T-cell (primary cell): ENCODE measurements at regions of chr6 and their contacts with region 1.

Region 1: GRCh38 chr6:168609914-168610490 is 169.0 kb downstream of the SMOC2 start:
- DNase-seq: no peak
- ATAC-seq: no peak
- H3K4me3 ChIP-seq: no peak overlapping the region
- H3K4me3 Mint-ChIP-seq: no peak overlapping the region
- H3K27ac ChIP-seq: no peak overlapping the region
- H3K27ac Mint-ChIP-seq: no peak overlapping the region
- H3K4me1 ChIP-seq: no peaks in the 10 kb centered on the region
- H3K4me1 Mint-ChIP-seq: no peaks in the 10 kb centered on the region
- H3K27me3 ChIP-seq: peaks cover 0 to 7% of the 10 kb centered on the region in 2 experiments
- H3K27me3 Mint-ChIP-seq: peaks cover 2 to 7% of the 10 kb centered on the region in 2 donors

Region 2: DNA sequence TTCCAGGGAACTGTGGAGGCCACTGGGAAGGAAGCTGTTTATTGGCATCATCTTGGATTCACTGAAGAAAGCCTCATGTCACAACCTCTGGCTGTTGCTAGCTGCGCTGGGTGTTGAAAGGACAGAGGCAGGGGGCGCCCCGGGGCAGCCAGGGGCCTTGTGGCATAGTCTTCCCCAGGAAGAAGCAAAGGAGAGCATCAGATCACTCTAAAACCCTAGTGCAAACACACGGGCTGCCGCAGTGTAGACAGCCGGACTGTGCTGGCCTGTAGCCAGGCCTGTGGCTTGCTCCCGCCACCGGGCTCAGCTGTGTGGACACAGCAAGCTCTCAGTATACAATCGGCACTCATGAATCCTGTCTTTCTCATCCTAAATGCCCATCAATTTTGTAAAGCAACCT is 192.8 kb before region 1 on chr6:
- CTCF ChIA-PET with region 1: no interaction called
- POLR2A ChIA-PET with region 1: no interaction called
- DNase-seq: no peak
- ATAC-seq: no peak
- H3K4me3 ChIP-seq: no peak overlapping the region
- H3K4me3 Mint-ChIP-seq: no peak overlapping the region
- H3K27ac ChIP-seq: no peak overlapping the region
- H3K27ac Mint-ChIP-seq: no peak overlapping the region
- H3K4me1 ChIP-seq: no peaks in the 10 kb centered on the region
- H3K4me1 Mint-ChIP-seq: no peaks in the 10 kb centered on the region
- H3K27me3 ChIP-seq: peaks cover 0 to 10% of the 10 kb centered on the region in 2 experiments
- H3K27me3 Mint-ChIP-seq: peaks cover 0 to 7% of the 10 kb centered on the region in 2 donors

Region 3: GRCh38 chr6:168480481-168480880 is 129.5 kb before region 1 on chr6:
- CTCF ChIA-PET with region 1: no interaction called
- POLR2A ChIA-PET with region 1: no interaction called
- DNase-seq: no peak
- ATAC-seq: no peak
- H3K4me3 ChIP-seq: no peak overlapping the region
- H3K4me3 Mint-ChIP-seq: no peak overlapping the region
- H3K27ac ChIP-seq: no peak overlapping the region
- H3K27ac Mint-ChIP-seq: no peak overlapping the region
- H3K4me1 ChIP-seq: no peaks in the 10 kb centered on the region
- H3K4me1 Mint-ChIP-seq: peaks cover 0 to 3% (median 3%) of the 10 kb centered on the region in 3 donors
- H3K27me3 ChIP-seq: peaks cover 0 to 4% of the 10 kb centered on the region in 2 experiments
- H3K27me3 Mint-ChIP-seq: peaks cover 1 to 2% of the 10 kb centered on the region in 2 donors

Region 4: DNA sequence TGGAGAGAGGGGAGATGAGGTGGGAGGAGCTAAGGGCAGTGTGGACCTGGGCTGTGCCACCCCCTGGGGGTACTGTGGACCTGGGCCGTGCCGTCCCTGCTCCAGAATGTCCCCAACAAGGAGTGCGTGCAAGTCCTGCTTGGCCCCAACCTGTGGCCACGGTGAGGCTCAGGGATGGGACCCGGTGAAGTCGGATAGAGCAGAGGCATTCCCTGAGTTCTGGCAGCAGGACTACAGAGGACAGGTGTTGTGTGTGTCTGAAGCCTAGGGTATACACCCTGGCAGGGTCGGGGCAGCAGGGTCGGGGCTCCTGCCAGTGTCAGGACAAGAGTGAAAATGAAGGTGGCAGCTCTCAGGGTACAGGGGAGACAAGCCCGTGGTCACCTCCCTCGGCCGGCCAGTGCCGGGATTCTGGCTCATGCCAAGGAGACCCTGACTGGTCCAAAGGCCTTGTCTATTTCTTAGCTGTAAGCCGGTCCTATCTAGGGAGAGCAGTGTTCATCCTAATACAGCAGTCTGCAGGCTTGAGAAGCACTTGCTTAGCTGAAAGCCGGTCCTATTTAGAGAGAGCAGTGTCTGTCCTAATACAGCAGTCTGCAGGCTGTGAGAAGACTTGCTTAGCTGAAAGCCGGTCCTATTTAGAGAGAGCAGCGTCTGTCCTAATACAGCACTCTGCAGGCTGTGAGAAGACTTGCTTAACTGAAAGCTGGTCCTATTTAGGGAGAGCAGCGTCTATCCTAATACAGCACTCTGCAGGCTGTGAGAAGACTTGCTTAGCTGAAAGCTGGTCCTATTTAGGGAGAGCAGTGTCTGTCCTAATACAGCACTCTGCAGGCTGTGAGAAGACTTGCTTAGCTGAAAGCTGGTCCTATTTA is 73.1 kb before region 1 on chr6:
- CTCF ChIA-PET with region 1: no interaction called
- POLR2A ChIA-PET with region 1: interaction called in 1 of 2 experiments, 15 read pairs
- DNase-seq: no peak
- ATAC-seq: no peak
- H3K4me3 ChIP-seq: no peak overlapping the region
- H3K4me3 Mint-ChIP-seq: no peak overlapping the region
- H3K27ac ChIP-seq: no peak overlapping the region
- H3K27ac Mint-ChIP-seq: no peak overlapping the region
- H3K4me1 ChIP-seq: no peaks in the 10 kb centered on the region
- H3K4me1 Mint-ChIP-seq: peaks cover 0 to 2% (median 0%) of the 10 kb centered on the region in 3 donors
- H3K27me3 ChIP-seq: peaks cover 0 to 26% of the 10 kb centered on the region in 2 experiments
- H3K27me3 Mint-ChIP-seq: peaks cover 0 to 16% of the 10 kb centered on the region in 2 donors

Region 5: GRCh38 chr6:168648240-168649125 is 38.5 kb after region 1 on chr6:
- CTCF ChIA-PET with region 1: no interaction called
- POLR2A ChIA-PET with region 1: no interaction called
- DNase-seq: no peak
- ATAC-seq: no peak
- H3K4me3 ChIP-seq: no peak overlapping the region
- H3K4me3 Mint-ChIP-seq: no peak overlapping the region
- H3K27ac ChIP-seq: no peak overlapping the region
- H3K27ac Mint-ChIP-seq: no peak overlapping the region
- H3K4me1 ChIP-seq: no peaks in the 10 kb centered on the region
- H3K4me1 Mint-ChIP-seq: no peaks in the 10 kb centered on the region
- H3K27me3 ChIP-seq: peaks cover 0 to 34% of the 10 kb centered on the region in 2 experiments
- H3K27me3 Mint-ChIP-seq: peaks cover 3 to 12% of the 10 kb centered on the region in 2 donors

Region 6: GRCh38 chr6:168662301-168662936 is 52.4 kb after region 1 on chr6:
- CTCF ChIA-PET with region 1: no interaction called
- POLR2A ChIA-PET with region 1: no interaction called
- DNase-seq: no peak
- ATAC-seq: no peak
- H3K4me3 ChIP-seq: no peak overlapping the region
- H3K4me3 Mint-ChIP-seq: no peak overlapping the region
- H3K27ac ChIP-seq: no peak overlapping the region
- H3K27ac Mint-ChIP-seq: no peak overlapping the region
- H3K4me1 ChIP-seq: no peaks in the 10 kb centered on the region
- H3K4me1 Mint-ChIP-seq: no peaks in the 10 kb centered on the region
- H3K27me3 ChIP-seq: peaks cover 0 to 23% of the 10 kb centered on the region in 2 experiments
- H3K27me3 Mint-ChIP-seq: peaks cover 0 to 4% of the 10 kb centered on the region in 2 donors